ENCODE measurements at regions of chr17 and their contacts with region 1.

Region 1: GRCh38 chr17:43673516-43674323 is 12.0 kb upstream of the MEOX1 start:
- DNase-seq: peak in 1 of 2 donors; percentile 81
- H3K4me3 ChIP-seq: no peak overlapping the region
- H3K27ac ChIP-seq: no peak overlapping the region
- H3K4me1 ChIP-seq: peaks cover 0 to 15% of the 10 kb centered on the region in 2 donors
- H3K27me3 ChIP-seq: no peaks in the 10 kb centered on the region
- CTCF ChIP-seq: peak; percentile 91 to 96 (median 94)

Region 2: DNA sequence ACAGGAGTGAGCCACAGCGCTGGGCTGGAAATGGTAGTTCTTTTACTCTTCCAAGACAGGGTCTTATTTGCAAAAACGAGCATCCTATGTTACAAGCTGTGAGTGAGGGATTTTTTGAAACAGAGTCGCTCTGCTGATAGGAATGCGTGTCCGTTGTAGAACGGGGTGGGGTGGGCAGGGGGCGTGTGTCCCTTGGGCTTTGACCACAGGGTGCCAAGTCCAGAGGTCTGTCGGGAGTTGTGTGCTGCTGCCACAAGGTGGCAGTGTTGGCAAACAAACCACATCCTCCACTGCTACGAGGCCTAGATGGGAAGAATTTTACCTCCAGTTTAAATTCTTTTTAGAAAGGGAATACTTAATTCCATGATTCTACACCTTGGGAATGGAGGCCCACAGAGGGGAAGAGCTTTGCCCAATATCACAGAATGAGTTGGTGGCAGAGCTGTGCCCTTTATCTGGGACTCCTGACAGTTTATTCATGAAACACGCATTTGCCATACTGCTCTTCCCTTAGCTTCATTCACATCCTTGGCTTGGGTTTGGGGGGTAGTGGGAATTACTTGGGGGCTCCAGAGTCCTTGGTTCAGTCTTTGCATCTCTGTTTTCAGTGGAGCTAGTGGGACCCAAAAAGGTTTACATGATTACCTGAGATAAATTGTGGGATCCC is 97.0 kb before region 1 on chr17:
- intact Hi-C with region 1: loop called (anchors 1 kb)
- DNase-seq: peak in 1 of 2 donors; percentile 75
- H3K4me3 ChIP-seq: no peak overlapping the region
- H3K27ac ChIP-seq: no peak overlapping the region
- H3K4me1 ChIP-seq: peaks cover 0 to 15% of the 10 kb centered on the region in 2 donors
- H3K27me3 ChIP-seq: no peaks in the 10 kb centered on the region
- CTCF ChIP-seq: peak; percentile 90 to 94 (median 93)